Heart right ventricle (tissue), 16 donors: ENCODE measurements at regions of chr2 and their contacts with region 1.

Region 1: GRCh38 chr2:111946294-111947114 is 48.1 kb downstream of the MERTK start:
- DNase-seq: peak in 1 of 2 donors; percentile 47
- ATAC-seq: peak; percentile 78 to 95 (median 90)
- H3K4me3 ChIP-seq: no peak overlapping the region
- H3K27ac ChIP-seq: peak overlapping the region in 9 of 10 donors; percentile 18 to 75 (median 46)
- H3K4me1 ChIP-seq: peaks cover 0 to 28% (median 17%) of the 10 kb centered on the region in 9 donors
- H3K27me3 ChIP-seq: no peaks in the 10 kb centered on the region
- CTCF ChIP-seq: no peak

Region 2: GRCh38 chr2:111887819-111888223 is 58.7 kb before region 1 on chr2:
- intact Hi-C with region 1: no loop called
- DNase-seq: peak; percentile 72 to 73
- ATAC-seq: peak in 7 of 8 donors; percentile 43 to 61 (median 55)
- H3K4me3 ChIP-seq: no peak overlapping the region
- H3K27ac ChIP-seq: no peak overlapping the region
- H3K4me1 ChIP-seq: peaks cover 0 to 19% (median 11%) of the 10 kb centered on the region in 9 donors
- H3K27me3 ChIP-seq: no peaks in the 10 kb centered on the region
- CTCF ChIP-seq: peak; percentile 53 to 88 (median 77)

Region 3: GRCh38 chr2:111905990-111906735 is 40.3 kb before region 1 on chr2:
- intact Hi-C with region 1: loop called in 5 of 10 experiments (anchors 5 to 10 kb)
- DNase-seq: no peak
- ATAC-seq: peak in 3 of 8 donors; percentile 40 to 47 (median 45)
- H3K4me3 ChIP-seq: peak overlapping the region in 1 of 10 donors; percentile 11
- H3K27ac ChIP-seq: peak overlapping the region; percentile 12 to 84 (median 68)
- H3K4me1 ChIP-seq: peaks cover 3 to 88% (median 70%) of the 10 kb centered on the region in 9 donors
- H3K27me3 ChIP-seq: no peaks in the 10 kb centered on the region
- CTCF ChIP-seq: no peak

Region 4: DNA sequence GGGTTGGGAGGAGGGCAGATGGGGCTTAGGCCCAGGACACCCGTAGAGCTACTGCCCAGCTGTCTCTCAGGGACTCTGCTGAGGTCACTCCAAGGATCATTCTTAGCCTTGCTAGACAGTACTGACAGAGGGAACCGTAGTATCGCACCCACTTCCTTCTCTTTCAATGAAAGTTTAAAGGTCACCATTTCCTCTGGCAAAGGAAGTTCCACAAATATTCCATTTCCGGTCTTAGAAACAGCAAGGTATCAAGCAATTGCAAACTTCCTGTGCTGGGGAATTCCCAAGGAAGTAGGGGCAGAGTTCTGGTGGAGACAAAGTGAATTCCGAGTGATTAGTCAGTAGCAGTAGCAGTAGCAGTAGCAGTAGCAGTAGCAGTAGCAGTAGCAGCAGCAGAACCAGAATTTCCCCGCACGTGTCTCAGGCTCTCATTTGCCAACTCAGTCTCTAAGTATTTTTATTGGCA is 865.4 kb after region 1 on chr2:
- intact Hi-C with region 1: no loop called
- DNase-seq: peak in 1 of 2 donors; percentile 63
- ATAC-seq: peak; percentile 83 to 96 (median 88)
- H3K4me3 ChIP-seq: no peak overlapping the region
- H3K27ac ChIP-seq: peak overlapping the region in 7 of 10 donors; percentile 5 to 69 (median 41)
- H3K4me1 ChIP-seq: peaks cover 0 to 35% (median 27%) of the 10 kb centered on the region in 9 donors
- H3K27me3 ChIP-seq: no peaks in the 10 kb centered on the region
- CTCF ChIP-seq: no peak